Posterior cingulate gyrus (tissue), 11 donors: ENCODE measurements at regions of chr6 and their contacts with region 1.

Region 1: GRCh38 chr6:34757687-34758274 is 476 bp downstream of the SNRPC start:
- DNase-seq: no peak

Region 2: DNA sequence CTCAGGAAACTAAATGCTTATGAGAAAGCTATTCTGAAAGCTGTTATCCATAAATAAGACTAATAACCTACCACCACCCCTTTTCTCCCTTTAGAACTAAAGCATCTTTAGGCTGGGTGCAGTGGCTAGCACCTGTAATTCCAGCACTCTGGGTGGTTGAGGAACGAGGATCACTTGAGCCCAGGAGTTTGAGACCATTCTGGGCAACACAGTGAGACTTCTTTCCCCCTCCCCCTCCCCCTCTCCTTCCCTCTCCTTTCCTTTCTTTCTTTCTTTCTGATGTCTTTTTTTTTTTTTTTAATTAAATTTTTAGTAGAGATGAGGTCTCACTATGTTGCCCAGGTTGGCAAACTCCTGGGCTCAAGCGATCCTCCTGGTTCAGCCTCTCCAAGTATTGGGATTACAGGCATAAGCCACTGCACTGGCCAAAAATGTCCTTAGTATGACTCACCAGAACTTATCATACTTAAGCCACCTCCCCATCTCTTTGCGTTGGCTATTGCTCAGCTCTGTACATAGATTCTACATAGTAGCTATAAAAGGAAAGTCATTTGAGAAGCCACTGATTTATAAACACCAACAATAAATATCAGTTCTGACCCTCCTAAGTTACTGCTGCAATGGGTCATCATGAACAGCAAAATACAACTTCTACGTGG is 146.8 kb before region 1 on chr6:
- intact Hi-C with region 1: no loop called
- DNase-seq: no peak

Region 3: DNA sequence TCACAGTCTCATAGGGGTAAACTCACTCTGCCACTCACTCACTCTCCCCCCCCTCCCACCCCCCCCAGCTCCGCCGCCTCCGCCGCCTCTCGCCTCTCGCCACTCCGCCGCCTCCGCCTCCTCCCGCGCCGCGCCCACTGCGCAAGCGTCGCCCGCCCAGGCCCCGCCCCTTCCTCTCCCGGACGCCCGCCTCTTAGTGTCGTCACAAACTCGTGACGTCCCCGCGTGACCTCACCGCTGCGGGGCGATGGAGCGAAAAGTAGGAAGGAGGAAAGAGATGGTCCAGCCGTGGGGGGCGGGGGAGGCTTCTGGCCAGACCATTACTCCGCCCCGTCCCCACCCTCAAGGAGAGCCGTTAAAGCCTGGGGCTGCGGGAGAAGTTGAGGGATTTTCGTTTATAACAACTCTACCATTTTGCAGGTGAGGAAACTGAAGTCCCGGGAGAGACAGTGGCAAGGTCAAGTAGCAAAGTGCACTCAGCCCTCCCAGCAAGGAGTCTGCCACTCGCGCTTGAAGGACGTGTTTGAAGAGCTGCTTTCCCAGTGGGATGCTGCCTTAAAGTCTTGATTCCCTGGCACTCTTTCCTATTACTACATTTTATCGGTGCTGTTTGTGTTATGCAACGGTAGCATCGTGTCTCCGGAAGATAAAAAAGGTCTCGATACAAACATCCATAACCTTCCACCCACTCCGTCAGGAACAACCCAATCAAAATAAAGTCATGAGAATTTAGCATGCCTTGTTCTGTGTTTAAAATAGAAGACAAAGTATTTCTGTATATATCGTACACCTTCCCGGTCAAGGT is 60.8 kb before region 1 on chr6 and contains the start of gene ILRUN:
- intact Hi-C with region 1: loop called (anchors 2 kb)
- DNase-seq: peak; percentile 92 to 99 (median 96)

Region 4: GRCh38 chr6:34717466-34717865 is 40.3 kb before region 1 on chr6:
- intact Hi-C with region 1: no loop called
- DNase-seq: no peak

Region 5: DNA sequence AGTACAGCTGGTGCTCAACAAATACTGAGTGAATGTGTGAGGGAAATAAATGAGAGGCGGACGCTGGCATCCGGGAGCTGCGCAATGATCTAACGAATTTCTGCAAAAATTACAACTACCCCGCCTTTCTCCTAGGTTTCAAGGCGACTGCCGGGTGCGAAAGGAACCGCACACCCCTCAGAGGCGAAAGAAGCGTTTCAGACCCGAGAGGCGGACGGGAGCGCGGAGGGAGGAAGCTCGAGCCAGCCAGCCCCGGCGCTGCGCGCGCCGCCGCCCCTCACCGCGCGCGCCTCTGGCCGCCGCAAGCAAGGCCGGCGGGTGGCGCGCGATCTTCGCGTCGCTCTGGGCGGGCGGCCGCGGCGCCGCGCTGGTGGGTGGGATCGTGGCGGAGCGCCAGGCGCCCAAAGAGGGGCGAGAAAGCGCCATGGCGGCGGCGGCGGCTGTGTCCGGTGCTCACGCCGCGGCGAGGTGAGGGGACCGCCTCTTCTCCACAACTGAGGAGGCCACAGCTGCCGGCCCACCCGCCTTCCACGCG is 34.0 kb after region 1 on chr6 and contains the start of gene BLTP3A:
- intact Hi-C with region 1: loop called (anchors 5 kb)
- DNase-seq: peak; percentile 42 to 94 (median 66)

Region 6: DNA sequence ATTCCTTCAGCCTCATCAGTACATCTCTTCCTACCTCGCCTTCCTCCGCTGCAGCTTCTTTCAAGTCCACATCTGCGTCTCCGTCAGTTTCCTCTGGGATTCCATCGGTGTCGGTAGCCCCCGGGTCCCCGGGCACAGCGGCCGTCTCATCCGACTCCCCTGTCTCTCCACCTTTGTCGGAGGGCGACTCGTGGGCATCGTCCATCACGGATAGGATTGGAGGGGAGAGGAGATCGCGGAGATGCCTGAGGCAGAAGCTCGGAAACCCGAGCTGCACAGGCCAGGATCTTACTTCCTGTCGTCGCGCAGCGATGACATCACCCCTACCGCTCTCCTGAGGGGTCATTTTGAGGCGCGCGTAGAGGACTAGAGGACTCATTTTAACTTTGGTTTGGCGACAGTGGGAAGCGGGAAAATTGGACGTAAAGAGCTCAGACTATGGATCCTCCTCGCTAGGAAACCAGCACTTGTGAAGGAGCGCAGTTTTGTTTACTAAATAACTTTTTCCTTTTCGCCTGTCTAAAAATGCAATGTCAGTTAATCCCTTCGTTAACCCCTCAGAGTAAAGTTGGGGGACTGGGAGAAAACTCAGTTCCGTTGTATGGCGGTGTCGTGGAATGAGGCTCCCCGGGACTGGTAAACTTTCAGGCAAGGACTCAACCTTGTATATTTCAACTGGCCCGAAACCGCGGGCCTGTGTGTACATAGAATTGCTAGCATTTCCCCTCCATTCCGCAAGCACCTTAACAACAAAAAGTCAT is 130.2 kb after region 1 on chr6 and contains the start of gene TAF11:
- intact Hi-C with region 1: loop called (anchors 5 kb)
- DNase-seq: peak; percentile 88 to 98 (median 92)